Activated CD4-positive, alpha-beta T cell treated with anti-CD3 and anti-CD28 coated beads for 36 hours (primary cell): ENCODE measurements at regions of chr2 and their contacts with region 1.

Region 1: GRCh38 chr2:217510771-217511291 is 492.0 kb downstream of the TNS1 start:
- DNase-seq: peak; percentile 74
- ATAC-seq: peak; percentile 93
- H3K4me3 Mint-ChIP-seq: no peak overlapping the region
- H3K27ac Mint-ChIP-seq: no peak overlapping the region
- H3K4me1 Mint-ChIP-seq: peaks cover 2% of the 10 kb centered on the region
- H3K27me3 Mint-ChIP-seq: peaks cover 10% of the 10 kb centered on the region

Region 2: DNA sequence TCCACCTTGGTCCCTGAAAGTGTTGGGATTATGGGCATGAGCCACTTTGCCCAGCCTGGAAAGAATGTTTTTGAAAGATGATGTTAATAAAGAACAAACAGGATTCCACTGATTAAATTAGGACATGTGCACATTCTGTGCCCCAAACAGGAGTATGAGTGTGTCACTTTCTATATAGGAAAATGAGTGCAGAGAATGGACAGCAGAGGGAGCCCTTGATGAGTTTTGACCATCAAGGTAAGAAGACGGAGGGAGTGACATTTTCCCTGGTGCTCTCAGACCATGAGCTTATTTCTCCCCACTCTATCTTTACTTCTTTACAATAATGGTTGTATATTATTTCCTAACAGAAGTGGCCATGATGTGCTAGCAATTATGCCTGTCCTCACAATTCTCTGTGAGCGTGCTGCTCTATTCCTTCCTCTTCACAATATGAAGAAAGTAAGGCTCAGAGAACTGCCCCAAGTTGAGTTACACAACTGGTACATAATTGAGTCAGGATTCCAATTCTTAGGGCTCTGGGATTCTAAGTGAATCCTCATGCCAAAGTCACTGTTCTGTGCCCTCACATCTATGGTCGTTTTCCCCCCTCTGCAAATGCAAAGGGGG is 991.6 kb before region 1 on chr2:
- CTCF ChIA-PET with region 1: interaction called, 3 read pairs
- POLR2A ChIA-PET with region 1: no interaction called
- intact Hi-C with region 1: loop called in 1 of 2 experiments (anchors 5 kb)
- DNase-seq: peak; percentile 69
- ATAC-seq: peak; percentile 79
- H3K4me3 Mint-ChIP-seq: no peak overlapping the region
- H3K27ac Mint-ChIP-seq: no peak overlapping the region
- H3K4me1 Mint-ChIP-seq: no peaks in the 10 kb centered on the region
- H3K27me3 Mint-ChIP-seq: no peaks in the 10 kb centered on the region

Region 3: GRCh38 chr2:216698895-216699294 is 811.9 kb before region 1 on chr2:
- CTCF ChIA-PET with region 1: interaction called, 10 read pairs
- POLR2A ChIA-PET with region 1: no interaction called
- intact Hi-C with region 1: loop called (anchors 1 to 5 kb)
- DNase-seq: no peak
- ATAC-seq: peak; percentile 71
- H3K4me3 Mint-ChIP-seq: no peak overlapping the region
- H3K27ac Mint-ChIP-seq: no peak overlapping the region
- H3K4me1 Mint-ChIP-seq: peaks cover 8% of the 10 kb centered on the region
- H3K27me3 Mint-ChIP-seq: peaks cover 39% of the 10 kb centered on the region

Region 4: GRCh38 chr2:217049956-217050355 is 460.9 kb before region 1 on chr2:
- CTCF ChIA-PET with region 1: no interaction called
- POLR2A ChIA-PET with region 1: no interaction called
- intact Hi-C with region 1: loop called in 1 of 2 experiments (anchors 10 kb)
- DNase-seq: no peak
- ATAC-seq: no peak
- H3K4me3 Mint-ChIP-seq: no peak overlapping the region
- H3K27ac Mint-ChIP-seq: no peak overlapping the region
- H3K4me1 Mint-ChIP-seq: no peaks in the 10 kb centered on the region
- H3K27me3 Mint-ChIP-seq: peaks cover 9% of the 10 kb centered on the region

Region 5: GRCh38 chr2:217166241-217166850 is 344.5 kb before region 1 on chr2:
- CTCF ChIA-PET with region 1: interaction called, 4 read pairs
- POLR2A ChIA-PET with region 1: no interaction called
- intact Hi-C with region 1: loop called (anchors 10 kb)
- DNase-seq: no peak
- ATAC-seq: no peak
- H3K4me3 Mint-ChIP-seq: no peak overlapping the region
- H3K27ac Mint-ChIP-seq: no peak overlapping the region
- H3K4me1 Mint-ChIP-seq: peaks cover 17% of the 10 kb centered on the region
- H3K27me3 Mint-ChIP-seq: peaks cover 14% of the 10 kb centered on the region

Region 6: DNA sequence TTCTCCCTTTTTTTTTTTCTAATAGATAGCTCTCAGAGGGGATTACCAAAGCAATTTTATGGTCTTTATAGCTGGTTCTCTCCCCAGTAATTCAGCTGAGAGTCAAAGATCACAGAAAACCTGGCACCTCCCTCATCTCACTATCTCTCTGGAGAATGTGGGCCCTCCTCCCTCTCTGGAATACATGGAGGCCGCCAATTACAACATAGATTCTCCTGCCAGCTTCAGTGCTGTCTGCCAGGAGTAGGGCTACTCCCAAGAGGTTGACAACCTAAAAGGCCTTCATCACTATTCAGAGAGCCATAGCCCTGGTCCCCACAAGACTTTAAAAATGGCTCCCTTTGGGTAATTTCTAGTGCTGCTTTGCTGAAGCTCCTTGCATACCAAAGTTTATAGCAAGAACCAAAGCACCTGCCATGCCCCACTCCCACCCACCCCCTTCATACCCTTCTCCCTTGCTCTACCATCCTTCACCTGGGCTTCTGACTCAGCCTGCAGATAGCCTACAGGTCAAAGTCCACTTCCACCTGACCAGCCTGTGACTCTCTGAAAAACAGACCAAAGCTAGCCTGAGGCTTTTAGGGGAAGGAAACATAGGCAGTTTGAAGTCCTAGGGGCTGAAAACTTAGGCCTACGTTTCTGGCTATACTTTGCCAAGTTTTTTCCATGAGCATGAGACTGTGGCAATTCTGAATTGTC is 19.7 kb after region 1 on chr2:
- CTCF ChIA-PET with region 1: no interaction called
- POLR2A ChIA-PET with region 1: no interaction called
- intact Hi-C with region 1: no loop called
- DNase-seq: no peak
- ATAC-seq: no peak
- H3K4me3 Mint-ChIP-seq: no peak overlapping the region
- H3K27ac Mint-ChIP-seq: no peak overlapping the region
- H3K4me1 Mint-ChIP-seq: no peaks in the 10 kb centered on the region
- H3K27me3 Mint-ChIP-seq: peaks cover 3% of the 10 kb centered on the region

Region 7: GRCh38 chr2:217756375-217757107 is 245.7 kb after region 1 on chr2:
- CTCF ChIA-PET with region 1: no interaction called
- POLR2A ChIA-PET with region 1: no interaction called
- intact Hi-C with region 1: loop called in 1 of 2 experiments (anchors 5 kb)
- DNase-seq: peak; percentile 89
- ATAC-seq: peak; percentile 84
- H3K4me3 Mint-ChIP-seq: peak overlapping the region; percentile 61
- H3K27ac Mint-ChIP-seq: peak overlapping the region; percentile 82
- H3K4me1 Mint-ChIP-seq: peaks cover 24% of the 10 kb centered on the region
- H3K27me3 Mint-ChIP-seq: peaks cover 4% of the 10 kb centered on the region